Right lobe of liver (tissue), 6 donors: ENCODE measurements at regions of chr9 and their contacts with region 1.

Region 1: GRCh38 chr9:68619636-68620035 is 79.0 kb upstream of the TMEM252 start:
- DNase-seq: no peak
- ATAC-seq: no peak
- H3K4me3 ChIP-seq: no peak overlapping the region
- H3K27ac ChIP-seq: no peak overlapping the region
- H3K4me1 ChIP-seq: no peaks in the 10 kb centered on the region
- H3K27me3 ChIP-seq: no peaks in the 10 kb centered on the region
- CTCF ChIP-seq: no peak
- POLR2A ChIP-seq: no peak

Region 2: DNA sequence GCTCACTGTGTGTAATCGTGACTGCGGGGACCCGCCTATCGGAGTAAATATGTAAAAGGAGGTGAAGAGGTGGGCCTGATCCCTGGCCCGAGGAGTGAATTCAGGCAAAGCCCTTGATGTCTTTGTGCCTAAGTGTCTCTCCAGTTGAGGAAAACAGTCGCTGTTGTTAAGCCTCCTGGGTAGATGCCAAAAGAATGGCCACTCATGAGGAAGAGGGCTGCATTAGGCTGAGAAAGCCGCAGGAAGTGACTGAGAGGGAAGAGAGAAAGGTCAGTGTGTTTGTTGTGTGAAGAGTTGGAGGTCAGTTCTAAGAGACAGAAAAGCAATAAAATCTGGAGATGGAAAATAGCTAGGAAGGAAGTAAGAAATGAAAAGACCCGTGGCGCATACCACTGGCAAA is 49.6 kb after region 1 on chr9:
- intact Hi-C with region 1: loop called in 1 of 2 experiments (anchors 10 kb)
- DNase-seq: no peak
- ATAC-seq: peak; percentile 23 to 61 (median 44)
- H3K4me3 ChIP-seq: no peak overlapping the region
- H3K27ac ChIP-seq: no peak overlapping the region
- H3K4me1 ChIP-seq: no peaks in the 10 kb centered on the region
- H3K27me3 ChIP-seq: no peaks in the 10 kb centered on the region
- CTCF ChIP-seq: no peak
- POLR2A ChIP-seq: no peak